Activated T-helper 1 cell treated with anti-CD3 and anti-CD28 coated beads, Interleukin-12 subunit alpha, Interleukin-12 subunit beta, Interleukin-2, Interleukin-4 antibody, amounts not matched to agents 30 ng/mL and 10 ng/mL and 1 ng/mL, durations not matched to agents 14 hours and 24 hours and 36 hours (primary cell): ENCODE measurements at regions of chr9 and their contacts with region 1.

Region 1: GRCh38 chr9:133619791-133620190 is 10.6 kb upstream of the FAM163B start:
- DNase-seq: peak; percentile 50
- H3K4me3 Mint-ChIP-seq: peak overlapping the region; percentile 19
- H3K27ac Mint-ChIP-seq: peak overlapping the region; percentile 54
- H3K4me1 Mint-ChIP-seq: peaks cover 38% of the 10 kb centered on the region
- H3K27me3 Mint-ChIP-seq: peaks cover 6% of the 10 kb centered on the region

Region 2: GRCh38 chr9:133396952-133397351 is 222.8 kb before region 1 on chr9:
- intact Hi-C with region 1: no loop called
- DNase-seq: no peak
- H3K4me3 Mint-ChIP-seq: no peak overlapping the region
- H3K27ac Mint-ChIP-seq: no peak overlapping the region
- H3K4me1 Mint-ChIP-seq: no peaks in the 10 kb centered on the region
- H3K27me3 Mint-ChIP-seq: peaks cover 5% of the 10 kb centered on the region

Region 3: GRCh38 chr9:133677126-133678010 is 57.6 kb after region 1 on chr9:
- intact Hi-C with region 1: loop called (anchors 5 kb)
- DNase-seq: peak; percentile 65
- H3K4me3 Mint-ChIP-seq: peak overlapping the region; percentile 56
- H3K27ac Mint-ChIP-seq: peak overlapping the region; percentile 87
- H3K4me1 Mint-ChIP-seq: peaks cover 37% of the 10 kb centered on the region
- H3K27me3 Mint-ChIP-seq: no peaks in the 10 kb centered on the region